ENCODE measurements at regions of chr20 and their contacts with region 1.

Region 1: DNA sequence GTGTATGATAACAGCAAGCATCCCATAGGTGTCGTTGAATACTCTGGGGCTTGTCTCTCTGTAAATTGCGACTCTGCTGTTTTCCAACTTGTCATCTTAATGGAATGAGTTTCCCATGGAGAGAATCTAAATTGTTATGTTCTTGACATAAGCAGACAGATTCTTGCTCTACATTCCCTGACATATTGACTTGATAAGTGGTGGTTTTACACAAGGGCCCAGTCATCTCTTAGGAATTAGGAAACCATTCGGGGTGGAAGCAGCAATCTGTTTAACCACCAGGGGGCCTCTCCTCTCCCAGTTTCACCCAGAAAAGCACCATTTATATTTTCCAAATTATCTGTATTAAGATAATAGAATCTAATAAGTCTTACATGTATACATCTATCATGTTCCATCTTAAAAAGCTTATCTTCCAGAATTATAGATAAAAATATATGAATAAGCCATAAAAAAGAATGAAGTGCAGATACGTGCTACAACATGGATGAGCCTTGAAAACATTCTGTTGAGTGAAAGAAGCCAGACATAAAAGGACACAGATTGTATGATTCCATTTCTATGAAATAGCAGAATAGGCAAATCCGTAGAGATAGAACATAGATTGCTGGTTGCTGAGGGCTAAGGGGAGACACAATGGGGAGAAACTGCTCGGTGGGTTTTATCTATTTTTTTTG is 23.1 kb upstream of the MROH8 start:
- DNase-seq: peak in 1 of 2 donors; percentile 40
- H3K4me3 ChIP-seq: no peak overlapping the region
- H3K27ac ChIP-seq: peak overlapping the region; percentile 50 to 60
- H3K4me1 ChIP-seq: no peaks in the 10 kb centered on the region
- H3K27me3 ChIP-seq: no peaks in the 10 kb centered on the region
- CTCF ChIP-seq: peak; percentile 33 to 70 (median 56)
- POLR2A ChIP-seq: no peak

Region 2: GRCh38 chr20:37095599-37096414 is 106.6 kb before region 1 on chr20 and contains the start of gene RBL1:
- intact Hi-C with region 1: no loop called
- DNase-seq: peak; percentile 48 to 64
- H3K4me3 ChIP-seq: peak within 1 kb of the TSS; percentile 79 to 91 (median 83)
- H3K27ac ChIP-seq: peak within 1 kb of the TSS; percentile 33 to 64
- H3K4me1 ChIP-seq: peaks cover 0 to 4% of the 10 kb centered on the region in 2 donors
- H3K27me3 ChIP-seq: no peaks in the 10 kb centered on the region
- CTCF ChIP-seq: no peak
- POLR2A ChIP-seq: no peak
- total RNA-seq, gene RBL1: 4.6 to 10.8 (median 10.4) TPM

Region 3: DNA sequence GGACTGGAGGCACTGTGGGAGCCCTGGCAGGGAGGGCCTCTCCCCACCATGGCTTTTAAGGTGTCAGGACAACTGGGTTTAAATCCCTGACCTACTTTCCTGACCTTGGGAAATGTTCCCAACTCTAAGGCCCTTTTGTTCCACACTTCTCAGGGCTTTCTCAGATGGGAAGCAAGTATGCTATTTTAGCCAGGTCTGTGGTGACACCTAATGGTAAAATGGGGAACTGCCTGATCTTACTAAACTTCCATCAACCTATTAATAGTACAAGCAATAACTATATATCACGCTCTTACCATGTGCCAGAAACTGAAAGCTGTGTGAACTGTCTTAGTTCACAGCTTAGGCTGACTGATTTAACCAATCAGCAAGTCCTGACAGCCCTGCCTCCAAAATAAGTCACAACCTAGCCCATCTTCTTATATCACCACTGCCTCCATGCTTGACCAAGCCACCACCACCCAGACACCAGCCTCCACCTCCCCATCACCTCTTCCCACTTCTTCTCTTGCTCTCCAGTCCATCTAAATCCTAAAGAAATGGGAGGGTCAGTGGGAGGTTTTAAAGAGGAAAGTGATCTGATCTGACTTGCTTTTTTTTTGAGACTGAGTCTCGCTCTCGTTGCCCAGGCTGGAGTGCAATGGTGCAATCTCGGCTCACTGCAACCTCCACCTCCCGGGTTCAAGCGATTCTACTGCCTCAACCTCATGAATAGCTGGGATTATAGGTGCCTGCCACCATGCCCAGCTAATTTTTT is 332.2 kb after region 1 on chr20:
- intact Hi-C with region 1: loop called (anchors 10 kb)
- DNase-seq: peak in 1 of 2 donors; percentile 37
- H3K4me3 ChIP-seq: no peak overlapping the region
- H3K27ac ChIP-seq: no peak overlapping the region
- H3K4me1 ChIP-seq: no peaks in the 10 kb centered on the region
- H3K27me3 ChIP-seq: no peaks in the 10 kb centered on the region
- CTCF ChIP-seq: peak; percentile 84 to 95 (median 88)
- POLR2A ChIP-seq: no peak

Region 4: GRCh38 chr20:37796121-37796520 is 593.7 kb after region 1 on chr20:
- intact Hi-C with region 1: no loop called
- DNase-seq: no peak
- H3K4me3 ChIP-seq: no peak overlapping the region
- H3K27ac ChIP-seq: no peak overlapping the region
- H3K4me1 ChIP-seq: no peaks in the 10 kb centered on the region
- H3K27me3 ChIP-seq: no peaks in the 10 kb centered on the region
- CTCF ChIP-seq: no peak
- POLR2A ChIP-seq: no peak

Measured in breast epithelium (tissue), 4 donors.